Activated B cell treated with CpG ODN at 0.5 μM for 24 hours (primary cell): ENCODE measurements at regions of chr7 and their contacts with region 1.

Region 1: DNA sequence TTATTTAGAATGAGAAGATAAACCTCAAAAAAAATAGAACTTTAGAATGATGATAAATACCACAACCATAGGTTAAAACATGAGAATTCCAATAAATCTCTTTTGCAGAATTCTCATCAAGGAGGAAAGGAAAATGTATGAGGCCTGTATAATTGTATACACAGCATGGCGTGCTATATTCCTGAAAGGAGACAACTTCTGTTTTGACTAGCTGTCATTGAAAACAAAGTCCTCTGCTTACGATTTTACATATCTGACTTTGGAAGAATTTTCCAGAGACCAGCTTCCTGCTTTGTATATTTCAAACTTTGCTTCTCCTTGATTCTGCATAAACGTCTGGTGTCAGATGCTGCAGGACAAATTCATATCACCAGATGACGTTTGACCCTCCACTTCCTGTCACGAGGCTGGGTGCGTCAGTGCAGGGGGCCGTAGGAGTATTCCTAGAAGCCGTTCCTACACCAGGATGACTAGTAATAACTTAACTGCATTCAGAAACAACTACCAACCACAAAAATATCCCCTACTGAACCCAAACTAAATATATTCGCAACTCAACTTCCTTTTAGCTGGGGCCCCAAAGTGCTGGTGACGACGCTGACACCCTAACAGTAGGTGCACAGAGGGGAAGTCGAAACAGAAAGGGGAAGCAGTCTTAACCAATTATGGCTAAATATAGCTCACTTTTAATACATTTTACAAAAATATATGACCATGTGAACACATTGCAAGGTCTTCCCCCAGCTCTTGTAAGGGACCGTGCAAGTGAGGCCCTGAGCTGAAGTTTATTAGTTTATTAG is 178.6 kb upstream of the INHBA start:
- DNase-seq: peak; percentile 75
- ATAC-seq: peak; percentile 88
- H3K4me3 Mint-ChIP-seq: peak overlapping the region; percentile 80
- H3K27ac Mint-ChIP-seq: peak overlapping the region; percentile 91
- H3K4me1 Mint-ChIP-seq: peaks cover 76% of the 10 kb centered on the region
- H3K27me3 Mint-ChIP-seq: no peaks in the 10 kb centered on the region
- CTCF ChIP-seq: no peak

Region 2: DNA sequence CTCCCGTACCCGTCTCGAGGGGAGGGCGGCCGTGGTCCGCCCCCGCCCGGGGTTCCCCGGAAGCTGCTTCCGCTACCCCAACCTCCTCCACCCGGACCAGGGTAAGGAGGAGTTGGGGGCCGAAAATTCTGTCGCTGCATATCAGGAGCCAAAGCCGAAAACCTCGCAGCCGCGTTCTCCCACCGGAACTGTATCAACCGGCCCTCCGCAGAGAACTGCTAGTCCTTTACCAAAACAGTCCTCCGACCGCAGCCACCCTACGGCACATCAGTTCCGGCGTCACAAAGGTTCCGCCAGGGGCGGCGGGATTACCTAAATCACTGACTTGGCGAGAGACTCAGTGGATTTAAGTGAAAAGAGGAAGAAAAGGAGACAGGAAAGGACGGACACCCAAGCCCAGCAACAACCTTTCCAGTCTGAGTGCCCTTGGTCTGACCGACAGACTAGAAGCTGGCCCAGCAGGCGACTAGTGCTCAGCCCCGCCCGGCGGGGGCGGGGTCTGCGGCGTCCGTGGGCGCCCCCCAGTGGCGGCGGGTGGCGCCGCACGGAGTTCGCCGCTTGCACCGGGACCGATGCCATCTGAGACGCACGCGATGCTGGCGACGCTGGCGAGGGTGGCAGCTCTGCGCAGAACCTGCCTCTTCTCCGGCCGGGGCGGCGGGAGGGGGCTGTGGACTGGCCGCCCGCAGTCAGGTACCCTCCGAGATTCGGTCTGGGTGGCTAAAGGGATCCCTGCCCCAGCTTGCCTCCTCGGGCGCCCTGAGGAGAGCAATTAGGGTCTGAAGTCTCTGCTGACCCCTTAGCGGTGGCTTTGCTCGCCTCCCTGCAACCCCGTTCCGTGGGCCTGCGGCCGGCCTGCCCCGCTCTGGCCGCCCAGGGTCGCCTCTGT is 1746.9 kb before region 1 on chr7 and contains the starts of genes MPLKIP and SUGCT:
- CTCF ChIA-PET with region 1: no interaction called
- POLR2A ChIA-PET with region 1: no interaction called
- intact Hi-C with region 1: loop called (anchors 1 kb)
- DNase-seq: peak; percentile 91
- ATAC-seq: peak; percentile 90
- H3K4me3 Mint-ChIP-seq: peak within 1 kb of the TSS; percentile 97
- H3K27ac Mint-ChIP-seq: peak within 1 kb of the TSS; percentile 97
- H3K4me1 Mint-ChIP-seq: peaks cover 35% of the 10 kb centered on the region
- H3K27me3 Mint-ChIP-seq: no peaks in the 10 kb centered on the region
- CTCF ChIP-seq: no peak
- total RNA-seq, gene MPLKIP: 29.9 and 35.1 TPM in 2 replicates
- total RNA-seq, gene SUGCT: 0.61 and 1.3 TPM in 2 replicates

Region 3: GRCh38 chr7:41705109-41705901 is 176.2 kb before region 1 on chr7:
- CTCF ChIA-PET with region 1: no interaction called
- POLR2A ChIA-PET with region 1: interaction called, 5 read pairs
- intact Hi-C with region 1: loop called (anchors 2 kb)
- DNase-seq: peak; percentile 62
- ATAC-seq: peak; percentile 95
- H3K4me3 Mint-ChIP-seq: peak overlapping the region; percentile 80
- H3K27ac Mint-ChIP-seq: peak overlapping the region; percentile 50
- H3K4me1 Mint-ChIP-seq: peaks cover 21% of the 10 kb centered on the region
- H3K27me3 Mint-ChIP-seq: peaks cover 14% of the 10 kb centered on the region
- CTCF ChIP-seq: no peak

Region 4: GRCh38 chr7:41809940-41810576 is 71.5 kb before region 1 on chr7:
- CTCF ChIA-PET with region 1: no interaction called
- POLR2A ChIA-PET with region 1: interaction called, 3 read pairs
- intact Hi-C with region 1: loop called (anchors 2 kb)
- DNase-seq: no peak
- ATAC-seq: peak; percentile 66
- H3K4me3 Mint-ChIP-seq: no peak overlapping the region
- H3K27ac Mint-ChIP-seq: no peak overlapping the region
- H3K4me1 Mint-ChIP-seq: peaks cover 19% of the 10 kb centered on the region
- H3K27me3 Mint-ChIP-seq: no peaks in the 10 kb centered on the region
- CTCF ChIP-seq: no peak

Region 5: GRCh38 chr7:41900532-41900931 is 19.0 kb after region 1 on chr7:
- CTCF ChIA-PET with region 1: no interaction called
- POLR2A ChIA-PET with region 1: no interaction called
- intact Hi-C with region 1: no loop called
- DNase-seq: no peak
- ATAC-seq: no peak
- H3K4me3 Mint-ChIP-seq: no peak overlapping the region
- H3K27ac Mint-ChIP-seq: no peak overlapping the region
- H3K4me1 Mint-ChIP-seq: no peaks in the 10 kb centered on the region
- H3K27me3 Mint-ChIP-seq: peaks cover 2% of the 10 kb centered on the region
- CTCF ChIP-seq: no peak

Region 6: DNA sequence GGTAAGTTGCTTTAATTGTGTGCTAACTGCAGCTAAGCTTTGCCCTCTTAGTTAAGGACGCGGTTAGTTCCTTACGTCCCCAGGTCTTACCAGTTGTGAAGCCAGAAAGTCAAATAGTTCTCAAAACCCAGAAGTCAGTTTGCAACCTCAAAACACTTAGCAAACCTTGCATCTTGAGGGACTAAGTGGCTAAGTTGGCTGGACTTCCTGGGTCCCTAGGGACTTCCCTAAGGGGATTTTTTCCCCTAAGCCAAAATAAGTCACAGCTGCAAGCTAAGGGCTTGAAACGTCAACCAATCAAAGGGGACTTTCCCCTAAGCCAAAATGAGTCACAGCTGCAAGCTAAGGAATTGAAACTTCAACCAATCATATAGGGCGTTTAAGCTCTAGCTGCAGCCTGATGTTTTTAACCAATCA is 1194.7 kb after region 1 on chr7:
- CTCF ChIA-PET with region 1: no interaction called
- POLR2A ChIA-PET with region 1: no interaction called
- intact Hi-C with region 1: loop called (anchors 2 kb)
- DNase-seq: no peak
- ATAC-seq: peak; percentile 66
- H3K4me3 Mint-ChIP-seq: peak overlapping the region; percentile 6
- H3K27ac Mint-ChIP-seq: peak overlapping the region; percentile 16
- H3K4me1 Mint-ChIP-seq: peaks cover 23% of the 10 kb centered on the region
- H3K27me3 Mint-ChIP-seq: peaks cover 8% of the 10 kb centered on the region
- CTCF ChIP-seq: no peak